Dendritic cell treated with granulocyte-macrophage colony-stimulating factor and Interleukin-4, amounts not matched to agents 40 ng/mL and 50 ng/mL, for 4 days (primary cell): ENCODE measurements at regions of chr18 and their contacts with region 1.

Region 1: DNA sequence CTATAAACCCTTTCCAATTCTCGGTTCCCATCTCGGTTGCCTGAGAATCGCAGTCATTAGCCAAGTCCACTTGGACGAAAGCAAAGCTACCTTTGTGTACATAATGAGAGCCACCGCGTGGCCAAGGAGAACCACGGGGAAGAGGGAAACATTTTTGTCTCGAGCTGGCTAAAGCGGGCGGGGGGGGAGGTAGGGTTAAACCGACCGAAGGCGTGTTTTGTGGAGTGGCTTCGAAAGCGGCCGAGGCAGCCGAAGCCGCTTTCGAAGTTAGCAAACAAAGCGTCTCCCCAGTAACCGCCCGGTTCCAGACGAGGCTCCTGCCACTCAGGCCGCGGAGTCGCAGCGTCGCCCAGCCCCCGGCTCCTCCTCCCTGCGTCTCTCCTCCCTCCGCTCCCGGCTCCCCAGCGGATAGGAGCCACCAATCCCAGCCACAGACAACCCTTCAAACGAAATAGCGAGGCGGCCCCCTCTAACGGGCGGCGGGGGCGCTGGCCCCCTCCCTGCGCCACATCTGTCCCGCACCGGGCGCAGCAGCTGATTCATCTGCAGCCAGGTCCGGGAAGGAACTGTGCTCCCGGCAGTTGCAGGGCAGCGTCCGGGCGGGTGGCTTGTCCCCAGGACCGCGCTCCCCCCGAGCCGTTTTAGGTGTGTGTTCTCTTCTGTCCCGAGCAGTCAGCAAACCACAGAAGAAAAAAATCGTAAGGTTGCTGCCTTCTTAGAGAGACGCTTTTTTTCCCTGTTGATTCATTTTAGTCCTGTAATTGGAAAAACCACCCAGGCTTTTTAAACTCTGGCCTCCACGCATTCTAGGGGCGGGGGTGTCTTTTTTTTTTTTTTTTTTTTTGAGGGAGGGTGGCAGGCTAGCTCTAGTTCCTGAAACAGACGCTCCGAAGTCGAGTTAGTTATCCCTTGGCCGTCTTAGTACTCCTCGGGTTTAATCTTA is 1.8 kb upstream of the TGIF1 start:
- H3K4me3 Mint-ChIP-seq: peak overlapping the region; percentile 90
- H3K27ac Mint-ChIP-seq: peak overlapping the region; percentile 99
- H3K4me1 Mint-ChIP-seq: peaks cover 33% of the 10 kb centered on the region
- H3K27me3 Mint-ChIP-seq: no peaks in the 10 kb centered on the region

Region 2: GRCh38 chr18:3177902-3178687 is 270.1 kb before region 1 on chr18:
- intact Hi-C with region 1: loop called (anchors 5 kb)
- H3K4me3 Mint-ChIP-seq: peak overlapping the region; percentile 24
- H3K27ac Mint-ChIP-seq: peak overlapping the region; percentile 94
- H3K4me1 Mint-ChIP-seq: peaks cover 51% of the 10 kb centered on the region
- H3K27me3 Mint-ChIP-seq: no peaks in the 10 kb centered on the region

Region 3: GRCh38 chr18:3593904-3594661 is 145.9 kb after region 1 on chr18:
- intact Hi-C with region 1: loop called (anchors 1 kb)
- H3K4me3 Mint-ChIP-seq: peak overlapping the region; percentile 75
- H3K27ac Mint-ChIP-seq: peak overlapping the region; percentile 99
- H3K4me1 Mint-ChIP-seq: peaks cover 44% of the 10 kb centered on the region
- H3K27me3 Mint-ChIP-seq: no peaks in the 10 kb centered on the region

Region 4: DNA sequence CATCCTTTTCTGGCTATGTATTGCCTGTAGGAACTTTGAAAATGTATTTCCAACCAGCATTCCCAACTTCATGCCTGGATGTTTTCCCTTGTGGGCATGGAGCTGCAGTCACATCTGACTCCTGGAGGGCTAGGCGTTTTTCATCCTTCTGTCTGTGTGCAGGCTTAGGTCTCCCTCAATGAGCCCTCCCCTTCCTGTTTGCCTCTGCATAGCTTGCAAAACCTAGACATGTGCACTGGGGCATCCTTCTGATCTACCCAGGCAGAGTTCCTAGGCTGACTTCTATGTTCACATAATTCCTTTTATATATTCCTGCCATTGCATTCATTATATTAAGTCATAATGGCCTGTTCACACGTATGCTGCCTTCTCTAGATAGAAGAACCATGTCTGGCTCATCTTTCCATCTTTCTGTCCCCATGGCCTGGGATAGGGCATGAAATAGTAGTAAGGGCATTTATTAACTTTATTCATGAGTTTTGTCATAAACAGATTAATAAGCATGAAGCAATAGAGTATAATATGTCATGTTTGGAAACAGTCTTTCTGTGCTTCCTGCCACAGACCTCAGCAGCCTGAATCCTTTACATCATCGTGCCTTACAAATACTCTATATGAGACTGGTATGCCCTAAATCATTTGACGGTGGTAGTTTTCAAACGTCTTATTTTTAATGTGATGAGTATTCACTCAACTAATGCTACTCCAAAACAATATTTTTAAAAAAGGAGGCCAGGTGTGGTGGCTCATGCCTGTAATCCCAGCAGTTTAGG is 197.4 kb after region 1 on chr18:
- intact Hi-C with region 1: no loop called
- H3K4me3 Mint-ChIP-seq: no peak overlapping the region
- H3K27ac Mint-ChIP-seq: no peak overlapping the region
- H3K4me1 Mint-ChIP-seq: peaks cover 15% of the 10 kb centered on the region
- H3K27me3 Mint-ChIP-seq: no peaks in the 10 kb centered on the region